ENCODE measurements at regions of chr12 and their contacts with region 1.

Region 1: GRCh38 chr12:104834607-104835006 is 123.5 kb downstream of the SLC41A2 start:
- DNase-seq: no peak
- H3K4me3 Mint-ChIP-seq: no peak overlapping the region
- H3K27ac Mint-ChIP-seq: no peak overlapping the region
- H3K4me1 Mint-ChIP-seq: no peaks in the 10 kb centered on the region
- H3K27me3 Mint-ChIP-seq: no peaks in the 10 kb centered on the region

Region 2: GRCh38 chr12:104816845-104817503 is 17.6 kb before region 1 on chr12:
- CTCF ChIA-PET with region 1: no interaction called
- intact Hi-C with region 1: loop called (anchors 1 kb)
- DNase-seq: no peak
- H3K4me3 Mint-ChIP-seq: no peak overlapping the region
- H3K27ac Mint-ChIP-seq: no peak overlapping the region
- H3K4me1 Mint-ChIP-seq: no peaks in the 10 kb centered on the region
- H3K27me3 Mint-ChIP-seq: no peaks in the 10 kb centered on the region

Measured in activated naive CD4-positive, alpha-beta T cell treated with anti-CD3 and anti-CD28 coated beads for 36 hours (primary cell).